ENCODE measurements at regions of chr13 and their contacts with region 1.

Region 1: DNA sequence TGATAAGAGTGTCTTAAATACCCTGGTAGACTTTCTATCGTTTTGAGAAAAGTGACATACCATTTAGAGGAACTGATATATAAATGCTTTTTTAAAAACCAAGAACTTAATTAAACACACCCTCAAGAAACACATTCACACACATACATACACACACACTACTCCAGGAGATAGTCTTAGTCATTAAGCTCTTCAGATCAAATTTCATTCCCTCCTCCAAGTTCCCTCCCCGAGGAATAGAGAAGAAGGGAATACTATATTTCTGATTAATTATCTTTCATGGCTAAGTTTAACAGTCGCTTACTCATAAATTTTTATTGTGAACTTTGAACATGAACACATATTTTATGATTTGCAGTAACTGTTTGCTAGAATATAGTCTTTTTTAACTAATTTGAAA is 1109.5 kb downstream of the SLITRK1 start:
- DNase-seq: no peak
- H3K4me3 ChIP-seq: no peak overlapping the region
- H3K27ac ChIP-seq: no peak overlapping the region
- H3K4me1 ChIP-seq: no peaks in the 10 kb centered on the region
- H3K27me3 ChIP-seq: no peaks in the 10 kb centered on the region
- CTCF ChIP-seq: no peak
- POLR2A ChIP-seq: no peak

Region 2: GRCh38 chr13:81171065-81171647 is 1601.7 kb before region 1 on chr13:
- intact Hi-C with region 1: no loop called
- DNase-seq: no peak
- H3K4me3 ChIP-seq: no peak overlapping the region
- H3K27ac ChIP-seq: no peak overlapping the region
- H3K4me1 ChIP-seq: no peaks in the 10 kb centered on the region
- H3K27me3 ChIP-seq: no peaks in the 10 kb centered on the region
- CTCF ChIP-seq: peak in 2 of 3 donors; percentile 39 to 49
- POLR2A ChIP-seq: no peak

Region 3: DNA sequence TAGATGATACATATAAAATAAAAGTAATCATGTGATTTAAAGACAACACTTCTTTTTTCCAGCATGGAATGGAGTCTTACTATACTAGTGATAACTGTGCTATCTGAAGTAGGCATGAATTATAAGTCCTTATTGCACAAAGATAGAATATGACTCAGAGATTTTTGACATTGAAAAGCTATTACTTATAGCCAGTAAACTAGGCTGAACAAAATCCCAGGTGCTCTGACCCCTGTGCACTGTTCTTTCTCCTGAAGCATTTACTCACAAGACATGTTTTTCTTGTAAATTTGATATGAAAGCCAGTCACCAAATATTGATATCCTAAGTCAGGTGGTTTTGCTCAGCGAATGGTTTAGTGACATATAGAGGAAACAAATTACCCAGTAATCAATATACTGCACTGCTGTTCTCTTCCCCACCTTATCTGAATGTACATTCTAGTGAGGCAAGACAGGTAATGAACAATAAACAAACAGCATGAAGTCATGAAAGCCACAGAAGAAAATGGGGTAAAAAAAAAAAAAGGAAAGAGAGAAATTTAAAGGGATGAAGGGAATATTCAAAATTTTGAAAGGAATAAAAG is 864.9 kb before region 1 on chr13:
- intact Hi-C with region 1: loop called (anchors 5 kb)
- DNase-seq: no peak
- H3K4me3 ChIP-seq: no peak overlapping the region
- H3K27ac ChIP-seq: no peak overlapping the region
- H3K4me1 ChIP-seq: no peaks in the 10 kb centered on the region
- H3K27me3 ChIP-seq: no peaks in the 10 kb centered on the region
- CTCF ChIP-seq: no peak
- POLR2A ChIP-seq: no peak

Region 4: DNA sequence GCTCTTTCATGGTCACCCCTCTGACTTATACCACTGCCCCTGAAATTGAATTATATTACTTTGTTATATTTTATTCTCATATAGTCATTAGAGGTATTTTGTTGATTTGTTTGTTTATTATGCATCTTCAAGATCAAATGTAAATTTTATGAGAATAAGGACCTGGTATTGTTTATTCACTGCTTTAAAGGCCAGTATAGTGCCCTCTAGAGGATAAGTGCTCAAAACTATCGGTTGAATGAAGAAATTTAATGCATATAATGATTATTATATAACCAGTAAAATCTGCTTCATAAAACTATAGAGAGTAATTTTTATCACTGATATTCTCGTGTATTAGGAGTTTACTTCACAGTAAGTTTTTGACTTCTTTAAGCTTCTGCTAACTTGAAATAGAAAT is 292.4 kb before region 1 on chr13:
- intact Hi-C with region 1: no loop called
- DNase-seq: no peak
- H3K4me3 ChIP-seq: no peak overlapping the region
- H3K27ac ChIP-seq: no peak overlapping the region
- H3K4me1 ChIP-seq: no peaks in the 10 kb centered on the region
- H3K27me3 ChIP-seq: no peaks in the 10 kb centered on the region
- CTCF ChIP-seq: no peak
- POLR2A ChIP-seq: no peak